ENCODE measurements at regions of chr5 and their contacts with region 1.

Region 1: DNA sequence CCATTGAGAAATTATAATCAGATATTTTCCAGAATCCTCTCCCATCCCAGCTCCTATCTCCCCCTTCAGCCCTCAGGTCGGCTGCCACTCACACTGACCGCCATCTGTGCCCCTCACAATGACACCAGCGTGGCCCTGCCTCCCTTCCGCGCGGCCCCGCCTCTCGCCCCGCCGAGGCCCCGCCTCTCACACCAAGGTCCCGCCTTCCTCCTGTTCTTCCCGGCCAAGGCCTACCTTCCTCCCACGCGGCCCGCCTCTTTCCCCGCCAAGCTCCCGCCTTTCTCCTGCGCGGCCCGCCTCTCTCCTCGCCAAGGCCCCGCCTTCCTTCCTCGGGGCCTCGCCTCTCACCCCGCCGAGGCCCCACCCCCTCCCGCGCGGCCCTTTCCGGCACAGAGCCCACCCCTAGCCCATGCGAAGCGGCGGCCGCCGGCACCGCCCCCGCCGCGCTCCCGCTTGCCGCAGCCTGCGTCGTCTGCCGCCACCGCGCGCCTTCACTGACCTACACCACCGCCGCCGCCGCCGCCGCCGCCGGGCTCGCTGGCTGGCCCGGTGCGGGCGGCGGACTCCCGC is at the start of gene DNAJC21:
- DNase-seq: peak; percentile 97
- H3K4me3 Mint-ChIP-seq: peak within 1 kb of the TSS; percentile 98
- H3K27ac Mint-ChIP-seq: peak within 1 kb of the TSS; percentile 95
- H3K4me1 Mint-ChIP-seq: peaks cover 45% of the 10 kb centered on the region
- H3K27me3 Mint-ChIP-seq: no peaks in the 10 kb centered on the region
- total RNA-seq, gene DNAJC21: 64.0 and 67.8 TPM in 2 replicates

Region 2: DNA sequence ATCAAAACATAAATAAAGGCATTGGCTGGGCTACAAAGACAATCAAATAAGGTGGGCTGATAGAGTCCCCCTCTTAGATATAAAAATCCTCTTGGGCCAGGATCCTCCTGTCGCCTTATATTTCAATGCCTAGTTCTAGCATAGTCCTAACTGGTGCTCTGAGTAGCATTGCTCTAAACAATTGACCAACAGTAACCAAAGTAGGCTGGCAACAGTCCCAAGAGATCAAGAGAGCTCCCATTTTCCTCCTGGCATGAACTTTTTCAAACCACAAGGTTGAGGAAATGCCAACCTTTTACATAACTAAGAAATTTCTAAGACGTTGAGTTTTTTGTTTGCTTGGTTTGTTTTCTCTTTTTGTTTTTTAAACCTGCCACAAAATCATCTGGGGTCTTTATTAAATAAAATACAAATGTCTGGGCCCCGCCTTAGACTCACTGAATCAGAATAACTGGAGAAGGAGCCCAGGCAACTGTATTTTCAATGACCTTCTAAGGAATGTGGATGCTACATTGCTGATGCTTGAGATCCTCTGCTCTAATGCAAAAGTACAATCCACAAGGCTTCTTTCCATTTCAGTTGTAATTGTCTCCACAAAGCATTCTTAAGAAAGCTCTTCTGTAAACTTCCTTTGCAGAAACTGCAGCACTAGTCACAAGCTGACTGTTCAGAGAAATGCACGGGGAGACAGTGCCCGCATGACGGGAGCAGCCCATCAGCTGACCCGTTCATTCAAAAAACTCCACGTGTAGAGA is 947.6 kb before region 1 on chr5:
- intact Hi-C with region 1: no loop called
- DNase-seq: no peak
- H3K4me3 Mint-ChIP-seq: no peak overlapping the region
- H3K27ac Mint-ChIP-seq: no peak overlapping the region
- H3K4me1 Mint-ChIP-seq: no peaks in the 10 kb centered on the region
- H3K27me3 Mint-ChIP-seq: peaks cover 3% of the 10 kb centered on the region

Region 3: GRCh38 chr5:34838785-34839714 is 90.2 kb before region 1 on chr5 and contains the start of gene TTC23L:
- intact Hi-C with region 1: loop called (anchors 1 kb)
- DNase-seq: peak; percentile 88
- H3K4me3 Mint-ChIP-seq: peak within 1 kb of the TSS; percentile 93
- H3K27ac Mint-ChIP-seq: peak within 1 kb of the TSS; percentile 81
- H3K4me1 Mint-ChIP-seq: peaks cover 15% of the 10 kb centered on the region
- H3K27me3 Mint-ChIP-seq: peaks cover 11% of the 10 kb centered on the region
- total RNA-seq, gene TTC23L: not detected in 2 replicates

Region 4: DNA sequence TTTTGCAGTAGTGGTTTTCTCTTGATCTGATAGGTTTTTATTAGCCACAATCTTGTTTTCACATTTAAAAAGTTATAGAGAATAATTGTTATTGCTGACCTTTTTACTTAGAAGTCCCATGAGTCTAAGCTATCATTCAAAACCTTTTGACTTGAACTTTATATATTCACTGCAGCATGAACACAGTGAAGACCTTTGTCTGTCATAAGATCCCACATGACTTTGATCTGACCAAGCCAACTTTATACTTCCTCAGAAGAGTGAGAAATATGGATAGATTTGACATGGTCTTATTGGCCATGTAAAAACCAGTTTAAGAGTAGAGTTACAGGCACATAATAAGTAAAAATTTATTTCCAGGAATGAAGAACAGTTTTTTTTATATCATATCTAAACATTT is 48.0 kb before region 1 on chr5:
- intact Hi-C with region 1: no loop called
- DNase-seq: no peak
- H3K4me3 Mint-ChIP-seq: no peak overlapping the region
- H3K27ac Mint-ChIP-seq: no peak overlapping the region
- H3K4me1 Mint-ChIP-seq: no peaks in the 10 kb centered on the region
- H3K27me3 Mint-ChIP-seq: peaks cover 12% of the 10 kb centered on the region

Region 5: DNA sequence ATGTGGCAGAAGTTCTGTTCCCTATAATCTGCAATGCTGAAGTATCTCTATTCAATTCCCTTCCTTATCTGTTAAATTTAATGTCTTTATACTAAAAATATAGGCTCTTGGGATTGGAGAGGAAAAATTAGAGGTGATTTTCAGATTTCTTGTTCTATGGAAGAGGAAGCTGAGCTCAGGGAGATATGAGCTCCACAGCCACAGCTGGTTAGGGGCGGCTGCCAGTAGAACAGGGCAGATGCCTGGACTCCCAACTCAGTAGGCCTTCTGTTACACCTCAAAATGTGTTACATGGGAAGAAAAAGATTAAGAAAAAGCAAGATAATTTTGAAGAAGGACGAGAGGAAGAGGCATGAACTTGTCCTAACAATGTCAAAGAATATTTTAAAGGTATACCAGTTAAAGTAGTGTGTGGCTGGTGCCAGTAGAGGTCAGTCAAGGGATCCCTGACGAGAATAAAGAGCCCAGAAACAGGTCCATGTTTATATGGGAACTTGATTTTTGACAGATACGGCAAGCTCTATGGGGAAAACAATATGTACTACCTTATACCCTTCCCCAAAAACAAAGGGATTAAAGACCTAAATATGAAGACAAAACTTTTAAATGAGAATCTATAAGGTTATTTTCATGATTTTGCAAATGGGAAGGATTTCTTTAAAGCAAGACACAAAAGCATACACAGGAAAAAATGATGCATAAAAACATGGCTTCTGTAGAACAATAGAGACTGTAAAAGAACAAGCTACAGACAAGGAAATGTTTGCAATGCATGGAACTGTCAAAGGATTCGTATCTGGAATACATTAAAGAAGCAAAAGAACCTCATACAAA is 28.8 kb after region 1 on chr5:
- intact Hi-C with region 1: loop called (anchors 2 kb)
- DNase-seq: no peak
- H3K4me3 Mint-ChIP-seq: no peak overlapping the region
- H3K27ac Mint-ChIP-seq: no peak overlapping the region
- H3K4me1 Mint-ChIP-seq: peaks cover 27% of the 10 kb centered on the region
- H3K27me3 Mint-ChIP-seq: no peaks in the 10 kb centered on the region

Region 6: DNA sequence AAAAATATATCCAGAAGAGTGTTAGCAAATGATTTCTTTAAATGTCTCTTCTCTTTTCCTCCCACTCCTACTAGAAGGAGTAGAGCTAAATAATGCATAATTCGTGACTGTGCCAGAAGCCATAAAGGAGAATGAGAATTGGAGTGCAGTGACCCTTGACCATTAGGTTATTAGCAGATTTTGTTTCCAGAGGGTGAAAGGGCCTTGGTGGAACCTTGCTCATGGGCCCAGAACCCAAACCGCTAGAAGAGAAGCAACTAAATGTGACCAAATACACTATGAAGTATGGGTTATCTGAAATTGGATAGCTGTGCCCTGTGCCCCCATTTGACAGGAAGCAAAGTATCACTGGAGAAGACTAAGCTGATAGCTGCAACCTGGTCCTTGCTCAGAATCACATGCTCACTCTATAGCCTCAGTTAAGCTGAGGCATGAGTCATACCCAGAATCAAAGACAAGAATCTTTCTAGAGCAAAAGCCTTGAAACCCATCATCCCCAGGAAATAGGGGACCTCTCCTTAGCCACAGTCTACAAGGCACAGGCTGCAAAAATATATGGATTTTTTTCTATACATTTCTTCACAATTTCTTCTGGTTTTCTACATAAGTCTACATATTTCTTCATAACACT is 972.9 kb after region 1 on chr5:
- intact Hi-C with region 1: loop called (anchors 10 kb)
- DNase-seq: peak; percentile 50
- H3K4me3 Mint-ChIP-seq: peak overlapping the region; percentile 2
- H3K27ac Mint-ChIP-seq: peak overlapping the region; percentile 37
- H3K4me1 Mint-ChIP-seq: peaks cover 82% of the 10 kb centered on the region
- H3K27me3 Mint-ChIP-seq: peaks cover 7% of the 10 kb centered on the region

Region 7: GRCh38 chr5:36241631-36242533 is 1312.6 kb after region 1 on chr5 and contains the start of gene NADK2:
- intact Hi-C with region 1: loop called (anchors 1 kb)
- DNase-seq: peak; percentile 93
- H3K4me3 Mint-ChIP-seq: peak within 1 kb of the TSS; percentile 90
- H3K27ac Mint-ChIP-seq: peak within 1 kb of the TSS; percentile 96
- H3K4me1 Mint-ChIP-seq: peaks cover 39% of the 10 kb centered on the region
- H3K27me3 Mint-ChIP-seq: peaks cover 4% of the 10 kb centered on the region
- total RNA-seq, gene NADK2: 21.7 and 25.1 TPM in 2 replicates